B cell (primary cell): ENCODE measurements at regions of chr14 and their contacts with region 1.

Region 1: DNA sequence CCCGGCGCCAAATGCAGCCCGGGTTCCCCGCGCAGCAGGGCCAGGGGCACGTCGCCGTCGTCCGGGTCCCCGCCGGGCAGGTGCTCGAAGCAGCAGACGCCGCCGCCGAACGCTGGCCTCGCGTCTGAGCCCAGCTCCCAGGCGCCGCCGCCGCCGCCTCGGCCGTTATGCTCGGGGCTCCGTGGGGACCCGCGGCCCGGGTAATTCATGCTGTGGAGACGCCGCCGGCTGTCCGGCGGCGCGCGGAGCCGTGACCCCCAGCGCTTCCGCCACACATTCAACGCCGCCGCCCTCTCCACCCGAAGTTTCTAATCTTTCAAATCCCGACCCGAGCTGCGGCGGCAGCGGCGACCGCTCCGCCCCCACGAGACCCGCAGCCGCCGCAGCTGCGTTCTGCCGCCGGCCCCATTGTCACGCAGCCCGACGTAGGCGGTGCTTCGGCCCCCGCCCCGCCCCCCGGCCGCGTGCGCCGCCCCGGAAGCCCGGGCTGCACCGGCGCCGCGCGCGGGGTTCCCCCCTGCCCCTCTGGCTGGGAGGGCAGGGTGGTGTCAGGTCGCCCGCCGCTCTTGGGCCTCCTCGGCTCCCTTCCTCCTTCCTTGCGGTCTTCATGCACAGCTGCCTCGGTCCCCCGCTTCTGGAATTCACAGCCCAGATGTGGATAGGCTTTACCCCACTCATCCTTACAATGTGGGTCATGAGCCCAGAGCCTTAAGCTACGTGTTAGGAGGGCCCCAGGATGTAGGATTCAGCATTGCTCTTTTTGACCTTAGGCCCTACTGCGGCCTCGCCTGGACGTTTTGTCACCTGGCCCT is at the start of gene DDHD1:
- DNase-seq: peak; percentile 94
- ATAC-seq: peak; percentile 84
- H3K4me3 ChIP-seq: peak within 1 kb of the TSS; percentile 65 to 85 (median 78)
- H3K4me3 Mint-ChIP-seq: peak within 1 kb of the TSS; percentile 99
- H3K27ac ChIP-seq: peak within 1 kb of the TSS; percentile 86 to 96
- H3K27ac Mint-ChIP-seq: peak within 1 kb of the TSS; percentile 99
- H3K4me1 ChIP-seq: peaks cover 29 to 39% of the 10 kb centered on the region in 2 donors
- H3K4me1 Mint-ChIP-seq: peaks cover 44% of the 10 kb centered on the region
- H3K27me3 ChIP-seq: no peaks in the 10 kb centered on the region
- H3K27me3 Mint-ChIP-seq: no peaks in the 10 kb centered on the region
- CTCF ChIP-seq: no peak
- total RNA-seq, gene DDHD1: 75.4 and 75.8 TPM in 2 replicates

Region 2: DNA sequence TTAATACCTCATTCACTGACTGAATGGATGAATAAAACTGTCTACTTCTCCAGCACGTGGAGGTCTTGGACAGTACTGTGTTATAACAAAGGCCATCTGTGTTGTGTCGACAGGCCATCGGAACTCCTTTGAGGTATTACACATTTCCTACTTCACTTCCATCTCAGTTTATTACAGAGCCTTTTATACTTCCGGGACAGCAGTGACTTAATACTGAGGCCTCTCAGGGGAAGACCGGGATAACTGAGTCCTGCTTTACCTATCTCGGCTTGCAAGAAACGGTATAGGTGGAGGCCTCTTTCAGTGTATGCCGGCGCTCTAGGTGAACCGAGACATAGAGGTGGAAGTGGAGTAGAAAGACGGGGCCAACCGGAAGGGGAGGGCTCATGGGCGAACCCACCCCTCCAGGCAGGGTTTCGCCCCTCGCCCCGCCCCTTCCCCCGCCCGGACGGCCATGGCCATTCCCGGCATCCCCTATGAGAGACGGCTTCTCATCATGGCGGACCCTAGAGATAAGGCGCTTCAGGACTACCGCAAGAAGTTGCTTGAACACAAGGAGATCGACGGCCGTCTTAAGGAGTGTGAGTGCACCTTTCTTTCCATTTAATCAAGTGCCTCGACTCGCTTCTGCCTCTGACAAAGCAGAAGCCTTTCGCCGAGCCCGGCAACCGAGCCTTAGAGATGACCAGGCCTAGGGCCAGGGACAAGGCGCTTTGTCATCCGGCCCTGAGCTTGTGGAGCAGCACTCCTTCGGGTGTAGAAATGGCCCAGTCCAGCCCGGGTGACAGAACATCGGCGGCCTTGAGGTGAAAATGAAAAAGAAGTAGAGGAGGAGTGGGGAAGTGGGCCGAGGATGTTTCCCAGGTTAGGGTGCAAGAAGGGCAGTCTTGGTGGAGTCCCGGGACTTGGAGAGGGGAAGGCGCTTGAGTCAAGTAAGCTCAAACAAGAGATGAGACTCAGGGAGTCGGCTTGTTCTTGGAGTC is 446.1 kb before region 1 on chr14 and contains the start of gene PSMC6:
- CTCF ChIA-PET with region 1: no interaction called
- POLR2A ChIA-PET with region 1: no interaction called
- intact Hi-C with region 1: loop called (anchors 1 kb)
- DNase-seq: peak; percentile 94
- ATAC-seq: peak; percentile 99
- H3K4me3 ChIP-seq: peak within 1 kb of the TSS; percentile 83 to 94 (median 88)
- H3K4me3 Mint-ChIP-seq: peak within 1 kb of the TSS; percentile 98
- H3K27ac ChIP-seq: peak within 1 kb of the TSS; percentile 67 to 90
- H3K27ac Mint-ChIP-seq: peak within 1 kb of the TSS; percentile 98
- H3K4me1 ChIP-seq: peaks cover 16% of the 10 kb centered on the region in 2 donors
- H3K4me1 Mint-ChIP-seq: peaks cover 24% of the 10 kb centered on the region
- H3K27me3 ChIP-seq: no peaks in the 10 kb centered on the region
- H3K27me3 Mint-ChIP-seq: no peaks in the 10 kb centered on the region
- CTCF ChIP-seq: no peak
- total RNA-seq, gene PSMC6: 75.3 and 92.2 TPM in 2 replicates

Region 3: DNA sequence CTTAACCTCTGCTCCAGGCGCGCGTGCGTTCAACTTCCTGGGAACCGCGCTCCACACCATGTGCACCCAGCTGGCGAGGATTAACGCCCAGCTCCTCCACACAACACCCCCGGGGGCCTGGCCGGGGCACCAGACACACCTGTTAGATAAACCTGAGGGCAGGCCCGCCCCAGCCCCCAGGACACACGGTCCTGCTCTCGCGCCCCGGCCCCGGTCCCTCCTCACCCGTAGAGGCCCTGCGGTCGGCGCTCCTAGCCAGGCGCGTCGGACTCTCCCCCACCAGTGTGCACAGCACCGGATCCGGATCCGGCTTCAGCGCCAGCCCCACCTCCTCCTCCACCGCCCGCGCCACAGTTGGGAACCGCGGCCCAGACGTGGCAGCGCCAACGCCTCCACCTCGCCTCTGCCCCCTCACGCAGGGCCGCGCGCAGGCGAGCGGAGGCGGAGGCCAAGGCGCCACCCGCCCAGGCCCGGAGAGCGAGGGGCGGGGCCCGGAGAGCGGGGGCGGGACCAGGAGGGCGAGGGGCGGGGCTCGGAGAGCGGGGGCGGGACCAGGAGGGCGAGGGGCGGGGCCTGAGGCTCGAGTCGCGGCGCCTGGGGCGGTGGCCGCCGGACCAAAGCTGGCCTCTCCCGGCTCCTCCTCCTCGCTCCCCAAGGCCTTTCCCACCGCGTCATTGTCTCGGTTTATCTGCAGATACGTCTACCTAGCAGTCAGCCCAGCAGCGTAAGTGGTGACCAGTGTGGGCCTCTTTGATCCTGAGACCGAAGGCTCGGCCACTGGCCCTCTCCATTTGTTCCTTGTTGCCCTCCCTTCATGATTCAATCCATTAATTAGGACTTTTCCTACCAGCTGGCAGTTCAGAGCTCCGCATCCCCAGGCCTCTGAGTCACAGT is 361.6 kb before region 1 on chr14 and contains the start of gene GNPNAT1:
- CTCF ChIA-PET with region 1: no interaction called
- POLR2A ChIA-PET with region 1: no interaction called
- intact Hi-C with region 1: loop called (anchors 1 kb)
- DNase-seq: peak; percentile 89
- ATAC-seq: peak; percentile 96
- H3K4me3 ChIP-seq: peak within 1 kb of the TSS; percentile 58 to 87 (median 80)
- H3K4me3 Mint-ChIP-seq: peak within 1 kb of the TSS; percentile 89
- H3K27ac ChIP-seq: peak within 1 kb of the TSS; percentile 35 to 58
- H3K27ac Mint-ChIP-seq: peak within 1 kb of the TSS; percentile 86
- H3K4me1 ChIP-seq: peaks cover 14 to 20% of the 10 kb centered on the region in 2 donors
- H3K4me1 Mint-ChIP-seq: peaks cover 26% of the 10 kb centered on the region
- H3K27me3 ChIP-seq: no peaks in the 10 kb centered on the region
- H3K27me3 Mint-ChIP-seq: no peaks in the 10 kb centered on the region
- CTCF ChIP-seq: no peak
- total RNA-seq, gene GNPNAT1: 7.8 and 8.3 TPM in 2 replicates

Region 4: DNA sequence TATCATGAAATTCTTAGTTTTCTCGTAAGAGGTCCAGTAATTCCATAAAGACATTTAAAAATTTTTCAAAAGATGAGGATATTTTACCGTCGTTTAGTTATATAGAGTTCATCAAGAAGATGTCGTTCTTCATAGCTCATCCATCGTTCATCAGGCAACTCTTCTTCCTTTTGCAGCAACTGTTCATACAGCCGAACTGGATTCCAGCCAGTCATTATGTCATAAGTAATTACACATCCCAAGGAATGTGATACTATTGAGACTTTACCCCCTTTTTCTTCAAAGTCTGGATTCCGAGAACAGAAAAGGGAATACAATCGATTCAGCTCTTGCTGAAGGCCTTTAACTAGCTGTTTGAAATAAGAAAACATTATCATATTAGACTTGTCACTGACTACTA is 90.2 kb before region 1 on chr14:
- CTCF ChIA-PET with region 1: no interaction called
- POLR2A ChIA-PET with region 1: no interaction called
- intact Hi-C with region 1: loop called (anchors 5 kb)
- DNase-seq: no peak
- ATAC-seq: no peak
- H3K4me3 ChIP-seq: no peak overlapping the region
- H3K4me3 Mint-ChIP-seq: no peak overlapping the region
- H3K27ac ChIP-seq: no peak overlapping the region
- H3K27ac Mint-ChIP-seq: no peak overlapping the region
- H3K4me1 ChIP-seq: no peaks in the 10 kb centered on the region
- H3K4me1 Mint-ChIP-seq: no peaks in the 10 kb centered on the region
- H3K27me3 ChIP-seq: no peaks in the 10 kb centered on the region
- H3K27me3 Mint-ChIP-seq: no peaks in the 10 kb centered on the region
- CTCF ChIP-seq: no peak

Region 5: DNA sequence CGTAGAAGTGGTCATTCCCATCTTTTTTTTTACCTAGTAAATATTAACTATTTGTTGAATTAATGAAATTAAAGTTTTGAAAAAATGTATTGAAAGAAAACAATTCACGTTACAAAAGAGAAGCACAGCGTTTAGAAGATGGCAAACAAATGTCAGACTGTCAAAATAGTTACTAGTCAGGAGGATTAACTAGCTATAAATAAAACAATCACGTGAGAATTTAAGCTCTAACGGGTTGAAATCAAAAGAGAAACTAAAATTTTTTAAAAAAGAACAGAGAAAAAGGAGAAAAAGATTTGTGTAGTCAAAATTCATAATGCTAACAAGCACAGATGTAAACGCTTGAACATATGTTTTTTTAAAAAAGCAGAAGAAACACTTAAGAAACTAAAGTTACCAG is 26.4 kb before region 1 on chr14:
- CTCF ChIA-PET with region 1: interaction called, 7 read pairs
- POLR2A ChIA-PET with region 1: interaction called, 3 read pairs
- intact Hi-C with region 1: loop called (anchors 2 kb)
- DNase-seq: peak; percentile 54
- ATAC-seq: peak; percentile 17
- H3K4me3 ChIP-seq: peak overlapping the region in 4 of 5 experiments; percentile 4 to 35 (median 34)
- H3K4me3 Mint-ChIP-seq: peak overlapping the region; percentile 81
- H3K27ac ChIP-seq: peak overlapping the region; percentile 83 to 91
- H3K27ac Mint-ChIP-seq: peak overlapping the region; percentile 80
- H3K4me1 ChIP-seq: peaks cover 18 to 23% of the 10 kb centered on the region in 2 donors
- H3K4me1 Mint-ChIP-seq: peaks cover 17% of the 10 kb centered on the region
- H3K27me3 ChIP-seq: no peaks in the 10 kb centered on the region
- H3K27me3 Mint-ChIP-seq: no peaks in the 10 kb centered on the region
- CTCF ChIP-seq: no peak

Region 6: DNA sequence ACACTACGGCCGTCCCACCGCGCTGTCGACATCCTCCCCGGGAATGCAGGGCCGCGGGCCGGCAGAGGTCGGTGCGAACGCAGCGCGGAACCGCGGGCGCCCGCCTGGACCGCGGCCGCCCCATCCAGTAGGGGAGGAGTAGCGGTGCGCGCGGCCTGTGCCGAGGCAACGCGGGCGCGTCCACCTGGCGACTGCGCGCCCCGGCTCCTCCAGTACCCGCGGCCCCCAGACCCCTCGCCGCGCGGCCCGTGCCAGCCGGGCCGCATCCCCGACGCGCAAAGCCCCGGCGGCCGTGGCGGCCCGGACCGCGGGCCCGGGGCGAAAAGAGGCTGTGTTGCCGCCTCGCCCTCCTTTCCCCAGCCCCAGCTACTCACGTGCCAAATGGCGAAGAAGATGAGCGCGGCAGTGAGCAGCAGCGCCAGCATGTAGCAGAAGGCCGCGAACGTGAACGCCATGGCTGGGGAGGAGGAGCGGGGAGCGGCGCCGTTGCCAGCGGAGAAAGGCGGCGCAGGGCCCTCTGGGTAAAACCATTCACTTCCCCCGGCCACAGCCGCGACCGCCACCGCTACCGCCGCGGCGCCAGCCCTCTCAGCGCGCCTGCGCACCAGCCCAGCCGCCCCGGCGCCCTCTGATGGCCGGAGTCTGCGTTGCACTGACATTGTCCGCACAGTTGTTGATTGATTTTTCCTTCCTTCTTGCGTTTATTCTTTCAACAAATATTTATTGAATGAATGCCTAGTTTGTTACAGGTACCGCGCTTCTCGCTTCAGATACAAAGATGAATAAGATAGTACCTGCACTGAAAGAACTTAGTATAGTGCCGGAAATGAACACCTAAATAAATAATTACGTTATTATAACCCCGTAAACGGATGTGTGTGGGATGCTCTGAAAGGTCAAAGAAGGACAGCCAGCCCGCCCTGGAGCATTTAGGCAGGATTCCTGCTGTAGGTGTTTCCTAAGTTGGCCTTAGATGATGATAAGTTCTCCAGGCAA is 1288.1 kb after region 1 on chr14 and contains the start of gene CNIH1:
- CTCF ChIA-PET with region 1: no interaction called
- POLR2A ChIA-PET with region 1: no interaction called
- intact Hi-C with region 1: loop called (anchors 2 kb)
- DNase-seq: peak; percentile 96
- ATAC-seq: peak; percentile 93
- H3K4me3 ChIP-seq: peak within 1 kb of the TSS; percentile 51 to 73 (median 62)
- H3K4me3 Mint-ChIP-seq: peak within 1 kb of the TSS; percentile 90
- H3K27ac ChIP-seq: peak within 1 kb of the TSS; percentile 74 to 82
- H3K27ac Mint-ChIP-seq: peak within 1 kb of the TSS; percentile 90
- H3K4me1 ChIP-seq: peaks cover 26 to 27% of the 10 kb centered on the region in 2 donors
- H3K4me1 Mint-ChIP-seq: peaks cover 46% of the 10 kb centered on the region
- H3K27me3 ChIP-seq: peaks cover 0 to under 1% (median 0%) of the 10 kb centered on the region in 4 experiments
- H3K27me3 Mint-ChIP-seq: peaks cover 3% of the 10 kb centered on the region
- CTCF ChIP-seq: peak; percentile 96
- total RNA-seq, gene CNIH1: 42.8 and 52.0 TPM in 2 replicates

Region 7: DNA sequence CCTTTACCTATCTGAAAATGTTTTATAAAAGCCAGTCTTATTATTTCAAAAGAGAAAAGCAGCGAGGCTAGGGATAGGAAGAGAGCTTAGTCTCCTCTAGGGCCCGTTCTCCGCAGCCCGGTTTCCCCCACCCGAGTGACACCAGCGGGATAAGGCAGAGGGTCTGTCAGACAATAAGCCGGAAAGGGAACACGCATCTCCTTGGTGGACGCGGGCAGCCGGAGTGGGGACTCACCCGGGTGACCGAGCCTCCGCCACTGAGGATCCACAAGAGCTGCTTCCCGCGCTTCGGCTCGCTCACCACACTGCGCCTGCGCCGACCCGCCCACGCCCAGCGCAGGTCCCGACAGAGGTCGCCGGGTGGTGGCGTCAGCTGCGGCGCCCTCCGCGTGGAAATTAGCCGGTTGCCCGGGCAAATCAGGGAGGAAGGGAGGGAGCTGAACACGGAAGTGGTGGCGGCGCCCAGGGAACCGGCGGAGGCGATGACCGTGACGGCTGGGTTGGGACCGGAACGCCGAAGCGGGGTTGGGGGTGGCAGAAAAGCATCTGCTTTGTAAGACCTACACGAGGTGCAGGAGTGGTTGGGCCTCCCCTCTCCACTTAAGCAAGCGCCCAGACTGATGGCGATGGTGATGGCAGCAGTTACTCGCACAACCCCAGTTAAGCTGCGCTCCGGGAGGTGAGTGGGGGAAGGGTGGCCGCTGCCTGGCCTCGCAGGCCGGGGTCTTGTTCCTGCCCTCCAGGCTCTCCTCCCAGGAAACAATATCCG is 1873.9 kb after region 1 on chr14 and contains the starts of genes SOCS4 and WDHD1:
- CTCF ChIA-PET with region 1: no interaction called
- POLR2A ChIA-PET with region 1: no interaction called
- intact Hi-C with region 1: loop called (anchors 5 kb)
- DNase-seq: peak; percentile 97
- ATAC-seq: peak; percentile 93
- H3K4me3 ChIP-seq: peak within 1 kb of the TSS; percentile 62 to 95 (median 90)
- H3K4me3 Mint-ChIP-seq: peak within 1 kb of the TSS; percentile 94
- H3K27ac ChIP-seq: peak within 1 kb of the TSS; percentile 78 to 90
- H3K27ac Mint-ChIP-seq: peak within 1 kb of the TSS; percentile 91
- H3K4me1 ChIP-seq: peaks cover 18 to 30% of the 10 kb centered on the region in 2 donors
- H3K4me1 Mint-ChIP-seq: peaks cover 47% of the 10 kb centered on the region
- H3K27me3 ChIP-seq: no peaks in the 10 kb centered on the region
- H3K27me3 Mint-ChIP-seq: no peaks in the 10 kb centered on the region
- CTCF ChIP-seq: no peak
- total RNA-seq, gene SOCS4: 23.6 and 26.3 TPM in 2 replicates
- total RNA-seq, gene WDHD1: 6.2 and 6.5 TPM in 2 replicates